ENCODE measurements at regions of chr4 and their contacts with region 1.

Region 1: GRCh38 chr4:163554870-163555465 is 60.5 kb downstream of the TMA16 start:
- DNase-seq: peak in 2 of 9 experiments; percentile 32 to 51
- ATAC-seq: no peak
- H3K4me3 ChIP-seq: no peak overlapping the region
- H3K4me3 Mint-ChIP-seq: no peak overlapping the region
- H3K27ac ChIP-seq: no peak overlapping the region
- H3K27ac Mint-ChIP-seq: no peak overlapping the region
- H3K4me1 ChIP-seq: peaks cover 23% of the 10 kb centered on the region
- H3K4me1 Mint-ChIP-seq: peaks cover 28% of the 10 kb centered on the region
- H3K27me3 ChIP-seq: no peaks in the 10 kb centered on the region
- H3K27me3 Mint-ChIP-seq: peaks cover 3% of the 10 kb centered on the region
- CTCF ChIP-seq: peak; percentile 87

Region 2: GRCh38 chr4:163191999-163192398 is 363.0 kb before region 1 on chr4:
- CTCF ChIA-PET with region 1: no interaction called
- POLR2A ChIA-PET with region 1: no interaction called
- intact Hi-C with region 1: no loop called
- DNase-seq: no peak
- ATAC-seq: no peak
- H3K4me3 ChIP-seq: no peak overlapping the region
- H3K4me3 Mint-ChIP-seq: no peak overlapping the region
- H3K27ac ChIP-seq: no peak overlapping the region
- H3K27ac Mint-ChIP-seq: no peak overlapping the region
- H3K4me1 ChIP-seq: no peaks in the 10 kb centered on the region
- H3K4me1 Mint-ChIP-seq: no peaks in the 10 kb centered on the region
- H3K27me3 ChIP-seq: no peaks in the 10 kb centered on the region
- H3K27me3 Mint-ChIP-seq: peaks cover 8% of the 10 kb centered on the region
- CTCF ChIP-seq: no peak

Region 3: GRCh38 chr4:163415668-163416067 is 139.3 kb before region 1 on chr4:
- CTCF ChIA-PET with region 1: no interaction called
- POLR2A ChIA-PET with region 1: no interaction called
- intact Hi-C with region 1: no loop called
- DNase-seq: no peak
- ATAC-seq: no peak
- H3K4me3 ChIP-seq: no peak overlapping the region
- H3K4me3 Mint-ChIP-seq: no peak overlapping the region
- H3K27ac ChIP-seq: no peak overlapping the region
- H3K27ac Mint-ChIP-seq: no peak overlapping the region
- H3K4me1 ChIP-seq: no peaks in the 10 kb centered on the region
- H3K4me1 Mint-ChIP-seq: no peaks in the 10 kb centered on the region
- H3K27me3 ChIP-seq: no peaks in the 10 kb centered on the region
- H3K27me3 Mint-ChIP-seq: peaks cover 5% of the 10 kb centered on the region
- CTCF ChIP-seq: no peak

Region 4: DNA sequence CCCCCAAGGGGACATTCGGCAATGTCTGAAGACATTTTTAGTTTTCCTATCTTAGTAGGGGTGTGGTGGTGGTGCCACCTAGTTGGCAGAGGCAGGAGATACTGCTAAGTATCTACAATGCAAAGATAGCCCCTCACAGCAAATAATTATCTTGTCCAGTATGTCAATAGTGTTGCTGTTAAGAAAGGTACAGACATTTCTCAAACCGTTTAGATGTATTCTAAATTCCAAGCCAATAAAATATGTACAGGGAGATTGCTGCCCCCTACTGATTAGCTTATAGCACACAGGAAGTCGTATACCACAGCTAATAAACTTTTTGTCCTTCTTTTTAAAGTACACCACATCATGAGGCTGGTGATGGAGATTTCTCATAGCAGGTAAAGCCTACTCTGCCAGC is 200.0 kb after region 1 on chr4:
- CTCF ChIA-PET with region 1: interaction called, 9 read pairs
- POLR2A ChIA-PET with region 1: no interaction called
- intact Hi-C with region 1: loop called (anchors 1 to 2 kb)
- DNase-seq: peak in 2 of 9 experiments; percentile 17 to 43
- ATAC-seq: no peak
- H3K4me3 ChIP-seq: no peak overlapping the region
- H3K4me3 Mint-ChIP-seq: no peak overlapping the region
- H3K27ac ChIP-seq: no peak overlapping the region
- H3K27ac Mint-ChIP-seq: no peak overlapping the region
- H3K4me1 ChIP-seq: no peaks in the 10 kb centered on the region
- H3K4me1 Mint-ChIP-seq: no peaks in the 10 kb centered on the region
- H3K27me3 ChIP-seq: no peaks in the 10 kb centered on the region
- H3K27me3 Mint-ChIP-seq: no peaks in the 10 kb centered on the region
- CTCF ChIP-seq: no peak

Region 5: GRCh38 chr4:164731827-164732474 is 1177.0 kb after region 1 on chr4:
- CTCF ChIA-PET with region 1: interaction called, 28 read pairs
- POLR2A ChIA-PET with region 1: interaction called, 3 read pairs
- intact Hi-C with region 1: loop called in 1 of 2 experiments (anchors 1 kb)
- DNase-seq: peak in 7 of 9 experiments; percentile 15 to 57 (median 48)
- ATAC-seq: peak; percentile 44
- H3K4me3 ChIP-seq: no peak overlapping the region
- H3K4me3 Mint-ChIP-seq: no peak overlapping the region
- H3K27ac ChIP-seq: no peak overlapping the region
- H3K27ac Mint-ChIP-seq: no peak overlapping the region
- H3K4me1 ChIP-seq: no peaks in the 10 kb centered on the region
- H3K4me1 Mint-ChIP-seq: no peaks in the 10 kb centered on the region
- H3K27me3 ChIP-seq: peaks cover 0 to 2% of the 10 kb centered on the region in 2 experiments
- H3K27me3 Mint-ChIP-seq: peaks cover 10% of the 10 kb centered on the region
- CTCF ChIP-seq: peak; percentile 88

Region 6: GRCh38 chr4:165096776-165097175 is 1541.8 kb after region 1 on chr4:
- CTCF ChIA-PET with region 1: interaction called, 3 read pairs
- POLR2A ChIA-PET with region 1: no interaction called
- intact Hi-C with region 1: loop called in 1 of 2 experiments (anchors 5 kb)
- DNase-seq: peak in 2 of 9 experiments; percentile 10 to 15
- ATAC-seq: no peak
- H3K4me3 ChIP-seq: no peak overlapping the region
- H3K4me3 Mint-ChIP-seq: no peak overlapping the region
- H3K27ac ChIP-seq: no peak overlapping the region
- H3K27ac Mint-ChIP-seq: no peak overlapping the region
- H3K4me1 ChIP-seq: no peaks in the 10 kb centered on the region
- H3K4me1 Mint-ChIP-seq: no peaks in the 10 kb centered on the region
- H3K27me3 ChIP-seq: no peaks in the 10 kb centered on the region
- H3K27me3 Mint-ChIP-seq: no peaks in the 10 kb centered on the region
- CTCF ChIP-seq: peak; percentile 48

Measured in CD8-positive, alpha-beta T cell (primary cell).